OCI-LY7 (cell line): ENCODE measurements at regions of chr5 and their contacts with region 1.

Region 1: GRCh38 chr5:177425801-177426565 is 493 bp upstream of the GRK6 start:
- DNase-seq: peak; percentile 100
- H3K4me3 ChIP-seq: peak overlapping the region; percentile 68
- H3K27ac ChIP-seq: peak overlapping the region; percentile 62
- H3K4me1 ChIP-seq: peaks cover 49% of the 10 kb centered on the region
- CTCF ChIP-seq: no peak

Region 2: DNA sequence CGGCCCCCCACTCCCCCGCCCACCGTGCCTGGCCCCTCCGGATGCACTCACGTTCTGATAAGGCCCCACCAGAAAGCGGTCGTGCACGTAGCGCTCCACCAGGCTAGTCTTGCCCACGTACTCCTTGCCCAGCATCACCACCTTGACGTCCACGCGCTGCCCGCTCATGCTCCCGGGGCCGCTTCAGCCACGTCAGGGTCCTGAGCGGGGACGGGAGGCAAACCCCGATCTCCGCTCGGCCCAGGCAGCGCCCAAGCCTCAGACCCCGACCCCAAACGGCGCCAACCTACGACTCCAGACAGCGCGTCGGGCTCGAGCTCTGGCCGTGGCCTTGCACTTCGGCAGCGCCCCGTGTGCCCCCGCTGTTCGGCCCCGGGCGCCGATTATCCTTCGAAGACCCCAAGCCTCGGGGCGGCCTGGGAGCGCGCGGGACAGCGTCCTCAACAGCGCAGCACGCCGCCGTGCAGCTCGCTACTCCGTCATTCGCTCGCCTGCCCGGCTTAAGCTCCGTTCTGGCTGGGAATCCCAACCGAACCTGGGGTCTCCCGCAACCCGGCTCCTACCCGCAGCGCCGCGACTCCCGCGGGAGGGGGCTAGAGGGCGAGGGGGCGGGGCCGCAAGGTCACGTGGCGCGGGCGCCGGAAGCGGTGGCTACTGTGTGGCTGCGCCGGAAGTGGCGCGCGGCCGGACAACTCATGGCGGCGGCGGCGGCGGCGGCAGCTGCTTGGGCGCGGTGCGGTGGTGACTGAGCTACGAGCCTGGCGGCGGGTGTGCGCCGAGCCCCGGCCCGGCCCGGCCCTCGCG is 122.7 kb before region 1 on chr5 and contains the starts of genes PRELID1 and RAB24:
- CTCF ChIA-PET with region 1: interaction called, 10 read pairs
- POLR2A ChIA-PET with region 1: no interaction called
- intact Hi-C with region 1: no loop called
- DNase-seq: peak; percentile 92
- H3K4me3 ChIP-seq: peak within 1 kb of the TSS; percentile 100
- H3K27ac ChIP-seq: peak within 1 kb of the TSS; percentile 73
- H3K4me1 ChIP-seq: peaks cover 69% of the 10 kb centered on the region
- CTCF ChIP-seq: peak; percentile 60
- total RNA-seq, gene PRELID1: 217 and 249 TPM in 2 replicates
- total RNA-seq, gene RAB24: 25.8 and 43.1 TPM in 2 replicates

Region 3: DNA sequence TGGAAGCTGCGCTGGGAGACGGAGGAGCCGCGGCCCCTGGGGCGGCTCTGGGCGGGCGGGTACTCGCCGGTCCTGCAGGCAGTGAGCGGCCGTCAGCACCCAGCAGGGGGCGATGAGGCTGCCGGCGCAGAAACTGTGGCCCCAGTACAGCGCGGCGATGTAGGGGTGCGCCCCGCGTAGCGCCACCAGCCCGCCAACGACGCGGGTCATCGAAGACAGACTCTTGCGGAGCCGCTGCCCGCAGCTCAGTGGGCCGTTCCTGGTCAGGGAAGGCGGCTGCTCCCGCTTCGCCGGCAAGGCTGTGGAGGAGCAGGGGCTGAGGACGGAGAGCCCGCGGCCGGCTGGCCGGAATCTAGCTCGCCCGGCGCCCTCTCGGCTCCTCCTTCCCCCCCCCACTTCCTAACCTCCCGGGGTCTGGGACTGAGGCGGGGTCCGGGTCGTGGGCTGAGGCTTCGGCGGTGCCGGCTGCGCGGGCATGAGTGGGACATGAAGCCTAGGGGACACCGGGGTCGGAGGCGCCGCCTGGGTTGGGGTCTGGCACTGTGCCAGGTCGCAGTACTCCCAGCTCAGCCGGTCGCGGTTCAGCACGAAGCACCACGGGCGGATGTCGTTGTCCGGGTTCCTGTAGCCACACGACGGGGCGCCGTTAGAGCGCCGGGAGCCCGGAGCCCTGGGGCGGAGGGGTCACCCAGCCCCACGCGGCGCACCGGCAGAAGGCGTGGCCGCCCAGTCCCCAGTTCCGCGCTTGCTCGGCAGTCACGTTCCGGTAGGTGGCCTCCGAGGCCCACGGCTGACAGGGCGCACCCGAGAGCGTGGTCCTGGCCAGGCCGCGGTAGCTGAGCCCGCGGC is 22.0 kb before region 1 on chr5:
- CTCF ChIA-PET with region 1: interaction called, 10 read pairs
- POLR2A ChIA-PET with region 1: interaction called, 10 read pairs
- intact Hi-C with region 1: loop called (anchors 1 kb)
- DNase-seq: peak; percentile 83
- H3K4me3 ChIP-seq: peak overlapping the region; percentile 62
- H3K27ac ChIP-seq: no peak overlapping the region
- H3K4me1 ChIP-seq: peaks cover 18% of the 10 kb centered on the region
- CTCF ChIP-seq: peak; percentile 78

Region 4: DNA sequence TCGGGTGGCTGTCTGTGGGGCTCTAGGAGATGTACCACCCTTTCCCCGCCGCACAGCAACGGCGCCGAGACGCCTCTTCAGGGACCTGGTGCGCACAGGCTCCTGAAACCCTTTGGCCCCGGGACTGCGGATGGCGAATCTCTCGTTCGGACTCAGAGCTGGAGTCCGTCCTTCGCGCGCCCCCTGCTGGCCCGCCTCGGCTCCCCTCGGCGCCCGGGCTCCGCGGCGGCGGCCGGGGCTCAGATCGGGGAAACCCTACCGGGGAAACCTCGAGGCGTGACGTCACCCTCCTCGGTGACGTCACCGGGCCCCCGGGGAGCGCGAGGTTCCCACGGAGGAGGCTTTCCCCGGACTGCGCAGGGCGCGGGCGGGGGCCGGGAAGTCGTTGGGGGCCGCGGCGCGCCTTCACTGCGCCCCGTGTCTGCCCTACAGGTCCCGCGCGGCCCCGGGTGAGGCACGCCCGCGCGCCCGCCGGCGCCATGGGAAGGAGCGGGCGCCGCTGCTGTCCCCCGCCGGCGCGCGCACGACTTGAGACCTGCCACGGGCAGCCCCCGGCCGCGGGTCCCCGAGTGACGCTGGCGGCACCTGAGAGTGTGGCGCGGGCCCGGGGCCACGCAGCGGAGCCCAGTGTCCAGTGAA is 28.5 kb after region 1 on chr5:
- CTCF ChIA-PET with region 1: interaction called, 7 read pairs
- POLR2A ChIA-PET with region 1: no interaction called
- intact Hi-C with region 1: loop called (anchors 1 kb)
- DNase-seq: peak; percentile 91
- H3K4me3 ChIP-seq: peak overlapping the region; percentile 76
- H3K27ac ChIP-seq: peak overlapping the region; percentile 90
- H3K4me1 ChIP-seq: peaks cover 28% of the 10 kb centered on the region
- CTCF ChIP-seq: peak; percentile 84